ENCODE measurements at regions of chr3 and their contacts with region 1.

Region 1: DNA sequence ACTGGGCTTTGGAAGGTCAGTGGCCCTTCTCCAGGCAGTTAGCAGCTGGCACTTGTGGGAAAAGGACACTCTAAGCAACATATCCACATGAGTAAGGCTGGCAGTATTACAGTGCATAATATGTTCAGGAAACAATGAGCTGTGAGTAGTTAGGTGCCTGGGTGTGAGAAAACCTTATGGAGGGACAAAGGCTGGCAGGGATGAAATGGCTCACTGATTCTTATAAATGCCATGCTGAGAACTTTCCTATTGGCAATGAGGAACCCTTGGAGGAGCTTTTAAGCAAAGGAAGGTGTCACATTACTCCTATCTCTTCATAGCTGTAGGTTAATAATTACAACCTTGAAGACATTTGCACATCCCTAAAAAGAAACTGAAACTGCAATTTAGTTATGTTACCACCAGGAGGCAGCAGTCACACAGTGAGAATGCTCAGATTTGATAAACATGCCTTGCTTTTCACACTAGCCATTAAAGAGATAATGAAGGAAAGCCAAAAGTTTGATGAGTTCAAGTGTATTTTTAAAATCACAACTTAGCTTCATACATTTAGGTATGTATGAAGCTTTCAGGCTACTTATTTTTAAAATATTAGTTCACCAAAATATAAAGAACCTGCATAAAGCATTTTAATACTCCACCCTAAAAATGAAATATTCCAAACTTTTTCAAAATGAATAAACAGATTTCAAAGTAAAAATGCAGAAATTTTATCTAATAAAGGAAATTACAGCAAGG is 136.6 kb upstream of the SLC2A2 start:
- H3K4me3 Mint-ChIP-seq: no peak overlapping the region
- H3K27ac Mint-ChIP-seq: no peak overlapping the region
- H3K4me1 Mint-ChIP-seq: peaks cover 6% of the 10 kb centered on the region
- H3K27me3 Mint-ChIP-seq: no peaks in the 10 kb centered on the region

Region 2: GRCh38 chr3:171181907-171182690 is 18.9 kb after region 1 on chr3:
- intact Hi-C with region 1: loop called (anchors 2 kb)
- H3K4me3 Mint-ChIP-seq: no peak overlapping the region
- H3K27ac Mint-ChIP-seq: peak overlapping the region; percentile 6
- H3K4me1 Mint-ChIP-seq: peaks cover 41% of the 10 kb centered on the region
- H3K27me3 Mint-ChIP-seq: no peaks in the 10 kb centered on the region

Region 3: GRCh38 chr3:171383206-171384018 is 220.3 kb after region 1 on chr3:
- intact Hi-C with region 1: loop called (anchors 5 kb)
- H3K4me3 Mint-ChIP-seq: no peak overlapping the region
- H3K27ac Mint-ChIP-seq: no peak overlapping the region
- H3K4me1 Mint-ChIP-seq: peaks cover 16% of the 10 kb centered on the region
- H3K27me3 Mint-ChIP-seq: no peaks in the 10 kb centered on the region